ENCODE measurements at regions of chr9 and their contacts with region 1.

Region 1: DNA sequence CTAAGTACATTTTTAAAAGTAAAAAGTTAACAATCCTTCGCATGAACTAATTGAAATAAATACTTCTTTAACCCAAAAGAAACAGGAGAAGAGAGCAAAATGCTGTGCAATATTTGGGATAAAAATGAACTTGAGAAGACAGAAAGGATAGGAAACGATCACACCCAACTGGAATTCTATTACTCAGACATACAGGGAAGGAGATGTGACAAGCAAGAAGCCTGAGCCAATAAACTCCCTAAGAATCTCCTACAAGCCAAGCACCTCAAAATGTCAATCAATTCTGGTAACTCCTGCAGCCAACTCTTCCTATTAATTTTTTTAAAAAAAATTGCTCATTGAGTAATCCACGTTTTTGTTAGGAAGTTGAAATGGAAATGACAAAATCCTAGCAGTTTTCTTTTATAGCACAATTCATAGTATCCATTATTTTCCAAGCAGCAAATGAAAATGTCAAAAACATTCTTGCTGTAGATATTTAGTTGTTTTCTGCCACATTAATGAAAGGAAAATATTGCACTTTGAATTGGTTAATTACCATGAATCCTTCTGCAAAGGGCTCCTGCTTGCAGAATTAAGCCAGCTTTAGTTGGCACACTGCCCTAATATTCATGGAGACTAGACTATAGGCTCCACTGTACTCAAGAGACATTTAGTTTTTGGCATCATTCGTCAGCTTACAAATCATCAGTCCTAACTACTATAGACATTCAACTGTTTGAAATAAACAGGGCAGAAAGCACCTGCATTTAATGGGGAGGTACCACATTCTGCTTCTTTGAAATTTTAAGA is 89.0 kb downstream of the RFX3 start:
- DNase-seq: no peak
- CTCF ChIP-seq: no peak

Region 2: GRCh38 chr9:3238236-3238635 is 198.6 kb before region 1 on chr9:
- in situ Hi-C with region 1: loop called (anchors 10 kb)
- DNase-seq: no peak
- CTCF ChIP-seq: no peak